Naive thymus-derived CD4-positive, alpha-beta T cell (primary cell): ENCODE measurements at regions of chr6 and their contacts with region 1.

Region 1: GRCh38 chr6:89432875-89433251 is at the start of gene ANKRD6:
- DNase-seq: peak; percentile 61 to 96 (median 81)
- ATAC-seq: peak; percentile 98
- H3K4me3 ChIP-seq: peak within 1 kb of the TSS; percentile 63
- H3K4me3 Mint-ChIP-seq: peak within 1 kb of the TSS; percentile 83 to 95 (median 90)
- H3K27ac ChIP-seq: peak within 1 kb of the TSS; percentile 46
- H3K27ac Mint-ChIP-seq: peak within 1 kb of the TSS; percentile 43 to 93 (median 82)
- H3K4me1 ChIP-seq: peaks cover 7 to 13% of the 10 kb centered on the region in 2 donors
- H3K4me1 Mint-ChIP-seq: peaks cover 9 to 36% (median 22%) of the 10 kb centered on the region in 7 donors
- H3K27me3 ChIP-seq: no peaks in the 10 kb centered on the region
- H3K27me3 Mint-ChIP-seq: peaks cover 0 to 58% (median 0%) of the 10 kb centered on the region in 5 donors
- total RNA-seq, gene ANKRD6: 3.1 to 6.6 (median 3.8) TPM

Region 2: DNA sequence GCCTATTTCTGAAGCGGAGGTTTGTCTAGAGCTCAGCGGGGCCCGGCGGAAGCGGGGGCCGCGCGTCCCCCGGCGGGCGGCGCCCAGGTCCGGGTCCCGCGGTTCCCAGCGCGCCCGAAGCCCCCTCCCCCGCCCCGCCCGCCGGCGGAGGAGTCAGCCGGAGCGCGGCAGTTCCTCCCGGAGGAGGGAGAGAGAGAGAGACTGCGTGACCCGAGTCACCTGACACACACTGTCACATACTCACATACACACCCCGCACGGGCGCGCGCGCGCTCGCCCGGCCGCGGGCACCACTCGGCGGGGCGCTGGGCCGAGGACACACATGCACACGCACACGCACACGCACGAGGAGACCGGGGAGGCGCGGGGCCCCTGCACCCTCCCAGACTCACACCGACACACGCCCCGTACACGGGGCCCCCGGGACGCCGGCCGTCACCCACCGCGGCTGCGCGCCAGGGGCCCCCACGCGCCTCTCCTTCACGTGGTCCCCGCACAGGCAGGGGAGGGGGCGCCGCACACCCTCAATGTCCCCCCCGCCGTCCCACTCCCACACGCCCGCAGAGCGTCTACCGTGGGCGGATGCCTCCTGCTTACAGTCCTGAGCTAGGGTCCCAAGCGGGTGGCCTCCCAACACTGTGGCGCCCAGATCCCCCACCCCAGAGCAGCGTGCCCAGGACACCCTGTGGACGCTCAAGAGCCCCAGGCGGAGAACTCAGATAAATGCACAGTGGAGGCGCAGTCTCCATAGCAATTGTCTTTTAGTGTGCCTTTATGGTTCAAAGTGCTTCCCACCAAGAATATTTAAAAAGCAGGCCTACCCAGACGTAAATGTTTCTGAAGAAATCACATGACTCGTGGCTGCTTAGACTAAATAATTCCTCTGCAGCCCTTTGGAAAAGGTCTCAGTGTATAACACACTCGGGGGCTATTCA is 20.5 kb before region 1 on chr6 and contains the start of gene RRAGD:
- CTCF ChIA-PET with region 1: interaction called, 7 read pairs
- POLR2A ChIA-PET with region 1: interaction called, 7 read pairs
- intact Hi-C with region 1: loop called (anchors 1 kb)
- DNase-seq: peak; percentile 51 to 69 (median 61)
- ATAC-seq: peak; percentile 90
- H3K4me3 ChIP-seq: peak within 1 kb of the TSS; percentile 79
- H3K4me3 Mint-ChIP-seq: peak within 1 kb of the TSS; percentile 87 to 100 (median 97)
- H3K27ac ChIP-seq: peak within 1 kb of the TSS; percentile 57
- H3K27ac Mint-ChIP-seq: peak within 1 kb of the TSS; percentile 53 to 98 (median 88)
- H3K4me1 ChIP-seq: peaks cover 8% of the 10 kb centered on the region in 2 donors
- H3K4me1 Mint-ChIP-seq: peaks cover 2 to 24% (median 19%) of the 10 kb centered on the region in 7 donors
- H3K27me3 ChIP-seq: no peaks in the 10 kb centered on the region
- H3K27me3 Mint-ChIP-seq: peaks cover 6 to 64% (median 18%) of the 10 kb centered on the region in 5 donors
- total RNA-seq, gene RRAGD: 7.3 to 12.1 (median 9.6) TPM

Region 3: GRCh38 chr6:89610149-89610642 is 177.3 kb after region 1 on chr6:
- CTCF ChIA-PET with region 1: interaction called, 26 read pairs
- POLR2A ChIA-PET with region 1: interaction called, 4 read pairs
- intact Hi-C with region 1: loop called (anchors 1 kb)
- DNase-seq: peak; percentile 34 to 75 (median 65)
- ATAC-seq: peak; percentile 91
- H3K4me3 ChIP-seq: no peak overlapping the region
- H3K4me3 Mint-ChIP-seq: no peak overlapping the region
- H3K27ac ChIP-seq: no peak overlapping the region
- H3K27ac Mint-ChIP-seq: no peak overlapping the region
- H3K4me1 ChIP-seq: no peaks in the 10 kb centered on the region
- H3K4me1 Mint-ChIP-seq: peaks cover 0 to 17% (median 0%) of the 10 kb centered on the region in 7 donors
- H3K27me3 ChIP-seq: no peaks in the 10 kb centered on the region
- H3K27me3 Mint-ChIP-seq: no peaks in the 10 kb centered on the region

Region 4: GRCh38 chr6:89689732-89690131 is 256.9 kb after region 1 on chr6:
- CTCF ChIA-PET with region 1: no interaction called
- POLR2A ChIA-PET with region 1: no interaction called
- intact Hi-C with region 1: loop called in 1 of 2 experiments (anchors 10 kb)
- DNase-seq: no peak
- ATAC-seq: peak; percentile 41
- H3K4me3 ChIP-seq: no peak overlapping the region
- H3K4me3 Mint-ChIP-seq: no peak overlapping the region
- H3K27ac ChIP-seq: no peak overlapping the region
- H3K27ac Mint-ChIP-seq: peak overlapping the region in 2 of 9 donors; percentile 2 to 21
- H3K4me1 ChIP-seq: no peaks in the 10 kb centered on the region
- H3K4me1 Mint-ChIP-seq: peaks cover 0 to 18% (median 12%) of the 10 kb centered on the region in 7 donors
- H3K27me3 ChIP-seq: no peaks in the 10 kb centered on the region
- H3K27me3 Mint-ChIP-seq: no peaks in the 10 kb centered on the region